ENCODE measurements at regions of chr20 and their contacts with region 1.

Region 1: GRCh38 chr20:38057351-38057972 is 23.9 kb downstream of the RPRD1B start:
- DNase-seq: peak; percentile 82 to 88 (median 83)
- ATAC-seq: peak; percentile 69 to 86 (median 80)
- H3K4me3 ChIP-seq: no peak overlapping the region
- H3K27ac ChIP-seq: no peak overlapping the region
- H3K4me1 ChIP-seq: peaks cover 0 to 26% (median 9%) of the 10 kb centered on the region in 4 donors
- H3K27me3 ChIP-seq: no peaks in the 10 kb centered on the region
- CTCF ChIP-seq: peak; percentile 84 to 91 (median 88)
- POLR2A ChIP-seq: no peak

Region 2: DNA sequence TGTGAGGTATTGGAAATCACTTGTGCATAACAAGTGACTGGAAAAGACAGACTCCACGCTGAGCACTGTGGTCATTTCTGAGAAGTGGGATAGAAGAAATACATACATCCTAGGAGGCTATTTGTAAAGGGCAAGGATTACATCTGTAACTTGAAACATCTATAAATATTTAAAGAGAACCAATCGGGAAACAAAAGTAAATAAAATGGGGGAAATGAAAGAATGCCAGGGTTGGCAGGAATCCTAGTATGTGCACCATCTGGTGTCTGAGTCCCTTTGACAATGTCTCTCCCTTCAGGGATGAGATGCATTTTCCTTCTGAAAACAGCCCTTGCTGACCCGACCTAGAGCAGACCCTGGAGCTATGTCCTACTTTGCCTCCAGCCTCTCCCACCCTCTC is 101.4 kb before region 1 on chr20:
- intact Hi-C with region 1: no loop called
- DNase-seq: no peak
- ATAC-seq: peak in 2 of 4 donors; percentile 23 to 27
- H3K4me3 ChIP-seq: no peak overlapping the region
- H3K27ac ChIP-seq: no peak overlapping the region
- H3K4me1 ChIP-seq: no peaks in the 10 kb centered on the region
- H3K27me3 ChIP-seq: no peaks in the 10 kb centered on the region
- CTCF ChIP-seq: no peak
- POLR2A ChIP-seq: no peak

Region 3: GRCh38 chr20:37968841-37969401 is 88.5 kb before region 1 on chr20:
- intact Hi-C with region 1: no loop called
- DNase-seq: no peak
- ATAC-seq: no peak
- H3K4me3 ChIP-seq: no peak overlapping the region
- H3K27ac ChIP-seq: no peak overlapping the region
- H3K4me1 ChIP-seq: no peaks in the 10 kb centered on the region
- H3K27me3 ChIP-seq: no peaks in the 10 kb centered on the region
- CTCF ChIP-seq: no peak
- POLR2A ChIP-seq: no peak

Region 4: GRCh38 chr20:38165089-38165989 is 107.9 kb after region 1 on chr20 and contains the start of gene TGM2:
- intact Hi-C with region 1: loop called (anchors 5 to 10 kb)
- DNase-seq: peak; percentile 95 to 96 (median 96)
- ATAC-seq: peak; percentile 60 to 91 (median 80)
- H3K4me3 ChIP-seq: peak within 1 kb of the TSS; percentile 76 to 83 (median 80)
- H3K27ac ChIP-seq: peak within 1 kb of the TSS; percentile 57 to 88 (median 67)
- H3K4me1 ChIP-seq: peaks cover 2 to 56% (median 15%) of the 10 kb centered on the region in 4 donors
- H3K27me3 ChIP-seq: no peaks in the 10 kb centered on the region
- CTCF ChIP-seq: peak; percentile 89 to 96 (median 94)
- POLR2A ChIP-seq: peak; percentile 99
- total RNA-seq, gene TGM2: 135 to 940 (median 474) TPM

Region 5: GRCh38 chr20:38222231-38222922 is 164.9 kb after region 1 on chr20:
- intact Hi-C with region 1: loop called in 1 of 2 experiments (anchors 2 kb)
- DNase-seq: peak; percentile 64 to 78 (median 67)
- ATAC-seq: peak; percentile 75 to 84 (median 81)
- H3K4me3 ChIP-seq: no peak overlapping the region
- H3K27ac ChIP-seq: no peak overlapping the region
- H3K4me1 ChIP-seq: peaks cover 0 to 5% (median 0%) of the 10 kb centered on the region in 4 donors
- H3K27me3 ChIP-seq: no peaks in the 10 kb centered on the region
- CTCF ChIP-seq: peak; percentile 87 to 92 (median 90)
- POLR2A ChIP-seq: no peak

Region 6: GRCh38 chr20:38497246-38497935 is 439.9 kb after region 1 on chr20:
- intact Hi-C with region 1: no loop called
- DNase-seq: no peak
- ATAC-seq: no peak
- H3K4me3 ChIP-seq: no peak overlapping the region
- H3K27ac ChIP-seq: no peak overlapping the region
- H3K4me1 ChIP-seq: no peaks in the 10 kb centered on the region
- H3K27me3 ChIP-seq: no peaks in the 10 kb centered on the region
- CTCF ChIP-seq: no peak
- POLR2A ChIP-seq: no peak